Activated CD4-positive, alpha-beta T cell treated with anti-CD3 and anti-CD28 coated beads, Interleukin-2, amount 10 ng/mL, durations not matched to agents 24 days and 14 days (primary cell): ENCODE measurements at regions of chr12 and their contacts with region 1.

Region 1: GRCh38 chr12:50132505-50133135 is 20.6 kb downstream of the COX14 start:
- DNase-seq: peak; percentile 72
- H3K4me3 Mint-ChIP-seq: no peak overlapping the region
- H3K27ac Mint-ChIP-seq: peak overlapping the region; percentile 59
- H3K4me1 Mint-ChIP-seq: peaks cover 4% of the 10 kb centered on the region
- H3K27me3 Mint-ChIP-seq: no peaks in the 10 kb centered on the region

Region 2: DNA sequence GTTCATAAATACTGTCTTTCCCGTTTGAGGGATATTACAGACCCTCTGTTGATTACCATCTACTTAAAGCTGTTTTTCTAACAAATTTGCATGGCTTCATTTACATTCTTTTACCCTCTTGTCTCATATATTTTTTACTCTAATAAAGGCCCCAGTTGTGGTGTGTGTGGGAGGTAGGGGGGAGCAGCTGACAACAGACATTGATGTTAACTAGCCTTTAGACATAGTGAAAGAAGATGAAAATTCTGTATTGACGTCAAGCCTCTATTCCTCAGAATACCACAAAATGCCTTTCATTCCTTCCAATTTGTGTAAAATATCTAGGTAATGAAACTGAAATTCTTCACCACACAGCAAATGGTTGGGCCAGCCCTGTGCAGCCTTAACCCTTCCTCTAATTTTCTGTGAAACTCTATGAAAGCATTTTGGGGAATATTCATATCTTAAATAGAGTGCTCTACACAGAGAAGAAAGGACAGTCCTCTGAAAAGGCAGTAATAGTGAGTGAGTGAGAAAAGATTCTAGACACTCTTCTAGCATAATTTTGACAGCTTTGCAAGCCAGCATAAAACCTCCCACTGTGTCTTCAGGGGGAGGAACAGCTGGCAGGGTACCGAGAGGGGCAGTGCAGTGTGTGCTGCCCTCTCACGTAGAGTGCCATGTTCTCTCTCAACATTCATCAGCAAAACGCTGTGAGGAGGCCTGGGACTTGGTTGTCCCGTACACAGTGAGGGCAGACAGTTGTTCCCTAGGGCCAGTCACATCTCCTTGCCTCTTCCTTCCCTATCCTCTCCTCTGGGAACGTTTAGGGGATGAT is 54.7 kb after region 1 on chr12:
- intact Hi-C with region 1: no loop called
- DNase-seq: peak; percentile 74
- H3K4me3 Mint-ChIP-seq: peak overlapping the region; percentile 72
- H3K27ac Mint-ChIP-seq: peak overlapping the region; percentile 95
- H3K4me1 Mint-ChIP-seq: peaks cover 54% of the 10 kb centered on the region
- H3K27me3 Mint-ChIP-seq: no peaks in the 10 kb centered on the region

Region 3: GRCh38 chr12:50314629-50315312 is 182.2 kb after region 1 on chr12:
- intact Hi-C with region 1: loop called (anchors 1 kb)
- DNase-seq: no peak
- H3K4me3 Mint-ChIP-seq: no peak overlapping the region
- H3K27ac Mint-ChIP-seq: no peak overlapping the region
- H3K4me1 Mint-ChIP-seq: no peaks in the 10 kb centered on the region
- H3K27me3 Mint-ChIP-seq: no peaks in the 10 kb centered on the region